ENCODE measurements at regions of chr17 and their contacts with region 1.

Region 1: DNA sequence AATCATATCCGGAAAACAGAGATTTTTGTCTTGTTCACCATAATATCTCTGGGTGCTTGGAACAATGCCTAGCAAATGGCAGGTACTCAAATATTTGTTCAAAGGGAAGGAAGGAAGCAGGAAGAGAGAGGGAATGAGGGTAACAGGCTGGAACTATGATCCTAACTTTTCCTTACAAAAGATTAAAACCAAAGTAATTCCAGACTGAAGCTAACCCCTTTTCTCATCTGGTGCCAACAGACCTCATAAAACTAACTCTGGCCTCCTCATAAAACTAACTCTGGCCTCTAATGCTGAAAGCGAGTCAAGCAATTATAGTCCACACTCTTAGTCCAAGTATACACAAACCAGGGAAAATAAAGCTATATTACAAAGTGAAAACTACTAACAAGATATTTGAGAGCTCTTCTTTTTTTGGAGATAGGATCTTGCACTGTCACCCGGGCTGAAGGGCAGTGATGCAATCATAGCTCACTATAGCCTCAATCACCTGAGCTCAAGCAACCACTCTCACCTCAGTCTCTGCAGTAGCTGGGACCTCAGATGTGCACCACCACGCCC is 84.6 kb downstream of the KANSL1 start:
- DNase-seq: peak; percentile 57
- ATAC-seq: peak; percentile 63
- H3K4me3 ChIP-seq: peak overlapping the region; percentile 6; the same call in 1 of the 2 replicates
- H3K27ac ChIP-seq: peak overlapping the region; percentile 38
- H3K4me1 ChIP-seq: peaks cover 31% of the 10 kb centered on the region
- H3K27me3 ChIP-seq: no peaks in the 10 kb centered on the region
- CTCF ChIP-seq: no peak

Region 2: DNA sequence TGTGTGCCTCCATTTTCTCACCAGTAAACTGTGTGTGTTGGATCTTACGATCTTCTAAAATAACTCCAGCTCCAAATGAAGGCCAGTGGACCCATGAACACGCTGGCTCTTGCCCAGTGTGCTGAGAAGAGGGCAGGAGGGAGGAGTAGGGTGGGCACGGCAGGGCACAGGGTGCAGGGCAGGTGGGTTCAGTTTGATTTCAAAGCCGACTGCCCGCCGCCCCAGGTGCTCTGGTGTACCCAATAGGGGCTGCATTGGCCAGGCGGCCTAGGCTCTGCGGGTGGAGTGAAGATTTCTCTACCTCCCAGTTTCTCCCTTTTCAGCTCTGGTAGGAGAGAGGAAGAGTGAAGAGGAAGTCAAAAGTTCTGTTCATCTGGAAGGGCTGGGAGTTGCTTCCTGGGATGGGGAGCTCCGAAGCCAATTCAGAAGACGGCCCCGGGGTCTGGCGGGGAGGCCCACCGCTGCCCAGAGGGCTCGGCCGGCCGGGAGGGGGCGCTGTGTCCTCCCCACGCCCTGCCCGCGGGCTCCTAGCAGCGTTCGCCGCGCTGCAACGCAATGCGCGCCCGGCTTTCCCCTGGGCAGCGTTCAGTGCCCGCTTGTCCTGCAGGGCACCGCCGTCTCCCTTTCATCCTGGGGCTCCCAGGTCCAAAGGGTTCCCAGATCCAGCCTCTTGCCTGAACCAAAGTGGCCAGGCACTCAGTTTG is 325.6 kb before region 1 on chr17:
- CTCF ChIA-PET with region 1: no interaction called
- POLR2A ChIA-PET with region 1: no interaction called
- intact Hi-C with region 1: no loop called
- DNase-seq: no peak
- ATAC-seq: peak; percentile 42; the same call in 1 of the 2 replicates
- H3K4me3 ChIP-seq: peak overlapping the region; percentile 60
- H3K27ac ChIP-seq: no peak overlapping the region
- H3K4me1 ChIP-seq: peaks cover 12% of the 10 kb centered on the region; the same call in 1 of the 2 replicates
- H3K27me3 ChIP-seq: peaks cover 78% of the 10 kb centered on the region
- CTCF ChIP-seq: peak; percentile 48

Region 3: GRCh38 chr17:46135879-46136563 is 27.4 kb after region 1 on chr17:
- CTCF ChIA-PET with region 1: no interaction called
- POLR2A ChIA-PET with region 1: no interaction called
- intact Hi-C with region 1: no loop called
- DNase-seq: no peak
- ATAC-seq: no peak
- H3K4me3 ChIP-seq: no peak overlapping the region
- H3K27ac ChIP-seq: no peak overlapping the region
- H3K4me1 ChIP-seq: peaks cover 22% of the 10 kb centered on the region
- H3K27me3 ChIP-seq: no peaks in the 10 kb centered on the region
- CTCF ChIP-seq: no peak

Region 4: DNA sequence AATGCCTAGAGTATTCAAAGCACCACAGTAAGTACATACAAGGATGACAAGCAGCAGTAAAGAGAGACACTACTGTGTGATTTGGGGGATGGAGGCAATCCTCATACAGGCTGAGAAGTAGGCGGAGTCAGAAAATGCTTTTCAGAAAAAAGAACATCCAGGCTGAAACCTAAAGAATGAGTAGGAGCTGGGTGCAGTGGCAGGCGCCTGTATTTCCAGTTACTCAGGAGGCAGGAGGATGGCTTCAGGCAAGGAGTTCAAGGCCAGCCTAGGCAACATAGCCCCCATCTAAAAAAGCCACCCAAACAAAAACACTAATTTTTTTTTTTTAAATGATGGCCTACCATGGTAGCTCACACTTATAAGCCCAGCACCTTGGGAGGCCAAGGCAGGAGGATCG is 74.3 kb after region 1 on chr17:
- CTCF ChIA-PET with region 1: no interaction called
- POLR2A ChIA-PET with region 1: no interaction called
- intact Hi-C with region 1: loop called (anchors 5 kb)
- DNase-seq: no peak
- ATAC-seq: peak; percentile 49
- H3K4me3 ChIP-seq: no peak overlapping the region
- H3K27ac ChIP-seq: no peak overlapping the region
- H3K4me1 ChIP-seq: peaks cover 19% of the 10 kb centered on the region
- H3K27me3 ChIP-seq: no peaks in the 10 kb centered on the region
- CTCF ChIP-seq: no peak

Measured in PC-3 (cell line).